ENCODE measurements at regions of chr6 and their contacts with region 1.

Region 1: GRCh38 chr6:36678518-36679027 is at the start of gene CDKN1A:
- DNase-seq: peak; percentile 86 to 97
- H3K4me3 ChIP-seq: peak within 1 kb of the TSS; percentile 75 to 79
- H3K27ac ChIP-seq: peak within 1 kb of the TSS; percentile 100
- H3K4me1 ChIP-seq: peaks cover 20 to 34% of the 10 kb centered on the region in 2 donors
- H3K27me3 ChIP-seq: no peaks in the 10 kb centered on the region
- CTCF ChIP-seq: peak in 1 of 3 experiments; percentile 18
- total RNA-seq, gene CDKN1A: 353 TPM

Region 2: GRCh38 chr6:36442671-36443470 is 235.7 kb before region 1 on chr6 and contains the starts of genes KCTD20 and PXT1:
- intact Hi-C with region 1: loop called (anchors 1 kb)
- DNase-seq: peak; percentile 67 to 94
- H3K4me3 ChIP-seq: peak within 1 kb of the TSS; percentile 88 to 92
- H3K27ac ChIP-seq: peak within 1 kb of the TSS; percentile 96 to 97
- H3K4me1 ChIP-seq: peaks cover 0 to 25% of the 10 kb centered on the region in 2 donors
- H3K27me3 ChIP-seq: no peaks in the 10 kb centered on the region
- CTCF ChIP-seq: peak in 1 of 3 experiments; percentile 10
- total RNA-seq, gene KCTD20: 71.5 TPM
- total RNA-seq, gene PXT1: not detected

Region 3: DNA sequence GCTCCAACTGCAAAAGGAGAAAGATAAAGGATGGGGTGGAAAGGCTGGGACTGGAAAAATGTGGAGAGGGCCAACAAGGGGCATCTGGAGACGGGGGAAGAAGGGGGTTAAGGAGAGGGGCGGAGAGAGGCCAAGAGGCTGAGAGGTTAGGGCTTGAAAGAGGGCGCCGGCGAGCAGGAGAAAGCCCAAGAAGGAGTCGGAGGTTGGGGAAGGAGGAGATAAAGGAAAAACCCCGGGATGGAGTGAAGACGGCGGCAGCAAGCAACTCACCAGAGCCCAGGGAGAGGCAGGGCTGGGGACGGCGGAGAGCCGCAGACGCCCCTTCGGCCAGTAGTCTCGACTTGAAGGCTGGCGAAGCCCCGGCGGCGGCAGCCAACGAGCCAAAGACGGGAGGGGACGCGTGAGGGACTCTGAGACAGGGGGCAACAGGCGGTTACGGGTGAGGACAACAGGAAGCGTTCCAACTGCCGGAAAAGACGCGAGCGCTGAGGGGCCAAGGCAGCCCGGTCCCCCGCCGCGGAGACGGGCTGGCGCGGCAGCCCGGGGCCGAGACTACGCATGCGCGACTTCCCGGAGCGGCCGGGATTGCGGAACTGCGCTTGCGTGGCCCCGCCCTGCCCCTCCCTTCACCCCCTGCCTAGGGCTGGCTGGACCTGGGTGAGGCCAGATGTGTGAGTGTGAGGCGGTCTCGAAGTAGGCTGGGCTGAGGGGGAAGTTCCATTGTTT is 131.5 kb before region 1 on chr6 and contains the start of gene STK38:
- intact Hi-C with region 1: loop called (anchors 1 kb)
- DNase-seq: peak; percentile 65 to 94
- H3K4me3 ChIP-seq: peak within 1 kb of the TSS; percentile 69 to 98
- H3K27ac ChIP-seq: peak within 1 kb of the TSS; percentile 89 to 97
- H3K4me1 ChIP-seq: peaks cover 0 to 16% of the 10 kb centered on the region in 2 donors
- H3K27me3 ChIP-seq: no peaks in the 10 kb centered on the region
- CTCF ChIP-seq: no peak
- total RNA-seq, gene STK38: 10.5 TPM

Region 4: GRCh38 chr6:36615018-36615761 is 63.4 kb before region 1 on chr6:
- intact Hi-C with region 1: loop called (anchors 2 kb)
- DNase-seq: peak in 1 of 2 donors; percentile 73
- H3K4me3 ChIP-seq: no peak overlapping the region
- H3K27ac ChIP-seq: peak overlapping the region; percentile 36 to 40
- H3K4me1 ChIP-seq: peaks cover 0 to 9% of the 10 kb centered on the region in 2 donors
- H3K27me3 ChIP-seq: no peaks in the 10 kb centered on the region
- CTCF ChIP-seq: peak; percentile 61 to 68 (median 62)

Region 5: DNA sequence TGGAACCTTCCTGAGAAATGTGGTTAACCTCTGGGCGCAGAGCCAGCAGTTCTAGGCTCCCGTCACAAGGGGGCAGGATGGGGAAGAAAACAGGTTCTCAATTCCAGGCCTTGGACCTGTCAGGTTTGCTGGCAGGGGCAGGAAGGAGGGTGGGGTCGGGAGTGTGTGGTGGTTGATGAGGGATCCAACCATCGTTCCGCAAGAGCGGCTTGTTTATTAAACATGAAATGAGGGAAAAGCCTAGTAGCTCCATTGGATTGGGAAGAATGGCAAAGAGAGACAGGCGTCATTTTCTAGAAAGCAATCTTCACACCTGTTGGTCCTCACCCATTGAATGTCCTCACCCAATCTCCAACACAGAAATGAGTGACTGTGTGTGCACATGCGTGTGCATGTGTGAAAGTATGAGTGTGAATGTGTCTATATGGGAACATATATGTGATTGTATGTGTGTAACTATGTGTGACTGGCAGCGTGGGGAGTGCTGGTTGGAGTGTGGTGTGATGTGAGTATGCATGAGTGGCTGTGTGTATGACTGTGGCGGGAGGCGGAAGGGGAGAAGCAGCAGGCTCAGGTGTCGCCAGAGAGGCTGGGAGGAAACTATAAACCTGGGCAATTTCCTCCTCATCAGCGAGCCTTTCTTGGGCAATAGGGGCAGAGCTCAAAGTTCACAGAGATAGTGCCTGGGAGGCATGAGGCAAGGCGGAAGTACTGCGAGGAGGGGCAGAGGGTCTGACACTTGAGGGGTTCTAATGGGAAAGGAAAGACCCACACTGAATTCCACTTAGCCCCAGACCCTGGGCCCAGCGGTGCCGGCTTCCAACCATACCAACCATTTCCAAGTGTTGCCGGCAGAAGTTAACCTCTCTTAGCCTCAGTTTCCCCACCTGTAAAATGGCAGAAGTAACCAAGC is 54.8 kb before region 1 on chr6:
- intact Hi-C with region 1: loop called (anchors 1 kb)
- DNase-seq: peak; percentile 43 to 93
- H3K4me3 ChIP-seq: no peak overlapping the region
- H3K27ac ChIP-seq: no peak overlapping the region
- H3K4me1 ChIP-seq: peaks cover 18 to 46% of the 10 kb centered on the region in 2 donors
- H3K27me3 ChIP-seq: no peaks in the 10 kb centered on the region
- CTCF ChIP-seq: peak; percentile 82 to 96 (median 82)

Region 6: GRCh38 chr6:36629784-36630183 is 48.8 kb before region 1 on chr6:
- intact Hi-C with region 1: loop called (anchors 1 kb)
- DNase-seq: no peak
- H3K4me3 ChIP-seq: no peak overlapping the region
- H3K27ac ChIP-seq: peak overlapping the region; percentile 85 to 90
- H3K4me1 ChIP-seq: peaks cover 20 to 37% of the 10 kb centered on the region in 2 donors
- H3K27me3 ChIP-seq: no peaks in the 10 kb centered on the region
- CTCF ChIP-seq: no peak

Region 7: GRCh38 chr6:36642913-36643817 is 35.4 kb before region 1 on chr6:
- intact Hi-C with region 1: no loop called
- DNase-seq: peak; percentile 83 to 96
- H3K4me3 ChIP-seq: no peak overlapping the region
- H3K27ac ChIP-seq: peak overlapping the region; percentile 47 to 56
- H3K4me1 ChIP-seq: peaks cover 3 to 17% of the 10 kb centered on the region in 2 donors
- H3K27me3 ChIP-seq: no peaks in the 10 kb centered on the region
- CTCF ChIP-seq: no peak

Region 8: DNA sequence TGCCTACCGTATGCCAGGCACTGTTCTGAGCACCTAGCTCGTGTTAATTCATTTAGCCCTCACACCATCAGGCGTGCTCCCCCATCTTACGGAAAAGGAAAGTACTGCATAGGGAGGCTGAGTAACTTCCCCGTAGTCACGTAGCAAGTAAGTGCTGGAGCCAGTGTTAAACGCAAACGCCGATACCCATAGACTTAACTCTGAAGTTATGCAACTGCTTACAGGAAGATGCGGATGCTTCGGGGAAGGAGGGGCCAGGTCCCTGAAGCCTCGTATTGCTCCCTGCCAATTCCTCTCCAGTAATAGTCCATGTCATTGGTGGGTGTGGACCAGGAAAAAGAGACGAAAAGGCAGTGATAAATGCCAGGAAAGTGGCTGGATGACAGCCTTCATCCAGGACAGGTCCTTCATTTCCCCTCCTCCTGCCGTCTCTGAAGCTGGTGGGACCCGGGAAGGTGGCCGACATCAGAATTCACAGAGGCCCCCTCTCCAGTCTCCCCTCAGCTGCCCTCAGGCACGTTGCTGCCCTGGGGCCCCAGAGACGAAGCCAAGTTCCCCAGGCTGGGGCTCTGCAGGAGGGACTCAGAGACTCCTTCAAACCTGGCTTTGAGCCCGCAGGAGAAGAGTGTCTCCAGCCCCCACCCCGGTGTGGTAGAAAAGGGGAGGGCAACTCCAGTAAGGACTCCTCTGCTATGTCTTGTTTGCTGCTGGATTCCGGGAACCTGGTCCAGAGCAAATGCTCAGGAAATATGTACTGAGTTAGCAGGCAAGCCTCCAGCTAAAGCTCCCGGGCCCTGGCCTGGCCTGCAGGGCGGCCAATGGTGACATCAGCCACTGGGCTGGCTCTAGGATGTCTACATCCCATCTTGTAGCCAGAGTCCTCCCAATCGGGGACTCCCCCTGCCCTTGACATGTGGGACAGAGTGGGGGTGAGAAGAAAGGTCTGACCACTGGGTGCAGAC is 56.8 kb after region 1 on chr6:
- intact Hi-C with region 1: loop called (anchors 2 kb)
- DNase-seq: peak; percentile 59 to 93
- H3K4me3 ChIP-seq: peak overlapping the region; percentile 39 to 56
- H3K27ac ChIP-seq: peak overlapping the region; percentile 71 to 88
- H3K4me1 ChIP-seq: peaks cover 3 to 16% of the 10 kb centered on the region in 2 donors
- H3K27me3 ChIP-seq: no peaks in the 10 kb centered on the region
- CTCF ChIP-seq: peak; percentile 15 to 51 (median 40)

Region 9: GRCh38 chr6:36929607-36930006 is 251.0 kb after region 1 on chr6:
- intact Hi-C with region 1: no loop called
- DNase-seq: no peak
- H3K4me3 ChIP-seq: no peak overlapping the region
- H3K27ac ChIP-seq: no peak overlapping the region
- H3K4me1 ChIP-seq: peaks cover 0 to 4% of the 10 kb centered on the region in 2 donors
- H3K27me3 ChIP-seq: no peaks in the 10 kb centered on the region
- CTCF ChIP-seq: no peak

Measured in ascending aorta (tissue), 2 donors.